ENCODE measurements at regions of chr2 and their contacts with region 1.

Region 1: GRCh38 chr2:203535078-203535783 is at the start of gene RAPH1:
- DNase-seq: peak; percentile 96
- total RNA-seq, gene RAPH1: 44.0 to 48.4 TPM

Region 2: GRCh38 chr2:203498161-203498560 is 37.1 kb before region 1 on chr2:
- intact Hi-C with region 1: no loop called
- DNase-seq: no peak

Region 3: GRCh38 chr2:203636588-203637470 is 101.6 kb after region 1 on chr2:
- intact Hi-C with region 1: loop called in 1 of 2 experiments (anchors 10 kb)
- DNase-seq: no peak